ENCODE measurements at regions of chr12 and their contacts with region 1.

Region 1: GRCh38 chr12:10673660-10674384 is at the start of gene STYK1:
- DNase-seq: peak; percentile 86 to 92
- H3K4me3 ChIP-seq: peak within 1 kb of the TSS; percentile 60
- H3K4me3 Mint-ChIP-seq: peak within 1 kb of the TSS; percentile 76
- H3K27ac Mint-ChIP-seq: peak within 1 kb of the TSS; percentile 58
- H3K4me1 ChIP-seq: peaks cover 3% of the 10 kb centered on the region; the same call in 1 of the 2 replicates
- H3K4me1 Mint-ChIP-seq: peaks cover 7% of the 10 kb centered on the region
- H3K27me3 ChIP-seq: no peaks in the 10 kb centered on the region
- H3K27me3 Mint-ChIP-seq: peaks cover 3% of the 10 kb centered on the region
- CTCF ChIP-seq: peak; percentile 98 to 99
- total RNA-seq, gene STYK1: 4.5 and 4.9 TPM in 2 replicates

Region 2: GRCh38 chr12:10235761-10236631 is 437.8 kb before region 1 on chr12:
- CTCF ChIA-PET with region 1: no interaction called
- POLR2A ChIA-PET with region 1: no interaction called
- intact Hi-C with region 1: loop called (anchors 1 kb)
- DNase-seq: peak in 1 of 2 experiments; percentile 43
- H3K4me3 ChIP-seq: no peak overlapping the region
- H3K4me3 Mint-ChIP-seq: no peak overlapping the region
- H3K27ac Mint-ChIP-seq: no peak overlapping the region
- H3K4me1 ChIP-seq: no peaks in the 10 kb centered on the region
- H3K4me1 Mint-ChIP-seq: no peaks in the 10 kb centered on the region
- H3K27me3 ChIP-seq: no peaks in the 10 kb centered on the region
- H3K27me3 Mint-ChIP-seq: peaks cover 4% of the 10 kb centered on the region
- CTCF ChIP-seq: peak; percentile 81 to 87

Region 3: DNA sequence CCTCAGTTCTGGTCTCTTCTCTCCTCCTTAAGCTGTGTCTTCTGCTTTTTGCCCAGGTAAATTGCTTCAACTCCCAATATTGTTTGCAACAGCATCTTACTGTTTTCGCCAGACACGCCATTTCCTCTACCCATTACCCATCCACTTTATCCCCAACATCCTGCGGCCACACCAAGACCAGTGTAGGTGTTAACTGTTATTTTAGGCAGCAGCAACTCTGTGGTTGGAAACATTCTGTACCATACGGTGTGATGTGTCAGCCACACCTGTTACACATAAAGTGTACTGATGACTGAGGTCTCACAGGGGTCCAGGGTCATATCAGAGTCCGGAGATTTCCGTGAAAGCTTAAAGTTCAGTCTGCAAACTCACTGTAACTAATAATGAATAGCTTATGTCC is 387.9 kb before region 1 on chr12:
- CTCF ChIA-PET with region 1: no interaction called
- POLR2A ChIA-PET with region 1: no interaction called
- intact Hi-C with region 1: no loop called
- DNase-seq: no peak
- H3K4me3 ChIP-seq: no peak overlapping the region
- H3K4me3 Mint-ChIP-seq: no peak overlapping the region
- H3K27ac Mint-ChIP-seq: no peak overlapping the region
- H3K4me1 ChIP-seq: no peaks in the 10 kb centered on the region
- H3K4me1 Mint-ChIP-seq: no peaks in the 10 kb centered on the region
- H3K27me3 ChIP-seq: no peaks in the 10 kb centered on the region
- H3K27me3 Mint-ChIP-seq: peaks cover 17% of the 10 kb centered on the region
- CTCF ChIP-seq: no peak

Region 4: DNA sequence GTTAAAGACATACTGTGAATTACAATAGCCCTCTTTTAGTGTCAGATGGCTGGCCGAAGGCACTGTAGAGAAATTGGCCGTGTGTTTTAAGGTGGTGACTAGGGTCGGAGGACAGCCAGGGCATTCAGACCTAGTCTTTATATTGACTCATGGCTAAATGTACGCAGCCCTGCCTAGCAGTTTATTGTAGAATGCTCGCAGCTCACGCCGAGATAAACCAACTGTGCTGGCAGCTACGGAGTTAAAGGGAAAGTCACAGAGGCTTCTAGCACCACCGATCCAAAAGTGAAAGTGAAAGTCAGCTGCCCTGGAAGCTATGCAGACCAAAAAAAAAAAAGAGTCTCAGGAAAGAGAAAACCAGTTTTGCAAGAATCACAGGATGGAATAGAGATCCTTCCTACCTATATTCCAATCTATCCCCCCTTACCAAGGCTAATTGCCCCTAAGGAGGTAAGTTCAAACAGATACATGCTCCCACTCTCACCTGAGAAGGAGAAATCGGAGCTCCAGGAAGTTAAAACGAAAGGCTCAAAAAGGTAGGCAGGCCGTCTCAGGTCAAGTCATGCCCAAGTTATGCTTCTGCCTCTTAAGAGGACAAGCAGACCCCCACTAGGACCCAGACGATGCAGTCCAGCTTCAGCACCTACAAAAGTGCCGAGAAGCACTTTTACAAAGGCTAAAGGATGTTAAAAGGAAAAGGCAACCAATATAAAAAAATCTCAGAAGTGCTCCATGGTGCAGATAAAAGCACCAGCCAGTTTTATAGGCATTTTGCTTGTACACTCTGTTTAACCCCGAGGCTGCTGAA is 308.8 kb before region 1 on chr12:
- CTCF ChIA-PET with region 1: no interaction called
- POLR2A ChIA-PET with region 1: no interaction called
- intact Hi-C with region 1: loop called (anchors 1 kb)
- DNase-seq: peak; percentile 84 to 88
- H3K4me3 ChIP-seq: peak overlapping the region; percentile 39
- H3K4me3 Mint-ChIP-seq: no peak overlapping the region
- H3K27ac Mint-ChIP-seq: no peak overlapping the region
- H3K4me1 ChIP-seq: peaks cover 57% of the 10 kb centered on the region
- H3K4me1 Mint-ChIP-seq: peaks cover 14% of the 10 kb centered on the region
- H3K27me3 ChIP-seq: no peaks in the 10 kb centered on the region
- H3K27me3 Mint-ChIP-seq: no peaks in the 10 kb centered on the region
- CTCF ChIP-seq: no peak

Region 5: GRCh38 chr12:10562306-10562933 is 111.4 kb before region 1 on chr12:
- CTCF ChIA-PET with region 1: no interaction called
- POLR2A ChIA-PET with region 1: no interaction called
- intact Hi-C with region 1: loop called (anchors 2 kb)
- DNase-seq: peak in 1 of 2 experiments; percentile 49
- H3K4me3 ChIP-seq: no peak overlapping the region
- H3K4me3 Mint-ChIP-seq: no peak overlapping the region
- H3K27ac Mint-ChIP-seq: no peak overlapping the region
- H3K4me1 ChIP-seq: no peaks in the 10 kb centered on the region
- H3K4me1 Mint-ChIP-seq: no peaks in the 10 kb centered on the region
- H3K27me3 ChIP-seq: no peaks in the 10 kb centered on the region
- H3K27me3 Mint-ChIP-seq: peaks cover 9% of the 10 kb centered on the region
- CTCF ChIP-seq: peak; percentile 67 to 83

Region 6: DNA sequence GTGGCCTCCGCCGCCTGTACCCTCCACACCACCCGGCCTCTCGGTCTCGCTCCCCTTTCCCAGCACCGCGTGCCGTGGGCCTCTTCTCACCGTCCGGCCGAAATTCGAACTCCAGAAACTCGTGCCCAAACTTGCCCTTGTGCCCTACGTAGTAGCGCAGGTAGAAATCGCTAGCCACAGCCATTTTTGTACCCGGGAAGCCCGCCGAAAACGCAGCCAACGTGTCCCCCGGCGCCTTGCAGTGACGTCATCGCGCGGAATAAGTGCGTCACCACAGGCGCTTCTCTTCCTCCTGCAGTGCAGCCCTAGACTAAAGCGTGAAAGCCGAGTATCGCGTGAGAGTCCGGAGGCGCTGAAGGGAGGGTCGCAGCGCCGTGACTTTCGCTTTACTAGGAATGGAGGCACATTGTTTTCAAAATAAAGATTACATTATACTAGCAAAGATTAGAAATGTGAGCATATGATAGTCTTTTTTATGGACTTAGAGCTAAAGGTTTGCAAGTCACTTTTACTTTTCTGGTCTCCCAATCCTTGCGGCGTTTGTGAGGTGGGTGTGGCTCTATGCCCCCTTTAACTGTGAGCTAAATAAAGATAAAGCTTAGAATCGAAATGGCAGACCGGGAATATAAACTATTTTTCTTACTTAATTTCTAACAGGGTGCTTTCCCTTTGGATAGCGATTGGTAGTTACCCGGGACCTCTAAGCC is 60.3 kb before region 1 on chr12 and contains the start of gene MAGOHB:
- CTCF ChIA-PET with region 1: no interaction called
- POLR2A ChIA-PET with region 1: no interaction called
- intact Hi-C with region 1: loop called (anchors 1 kb)
- DNase-seq: peak; percentile 99 to 100
- H3K4me3 ChIP-seq: peak within 1 kb of the TSS; percentile 90
- H3K4me3 Mint-ChIP-seq: peak within 1 kb of the TSS; percentile 100
- H3K27ac Mint-ChIP-seq: peak within 1 kb of the TSS; percentile 100
- H3K4me1 ChIP-seq: peaks cover 5% of the 10 kb centered on the region; the same call in 1 of the 2 replicates
- H3K4me1 Mint-ChIP-seq: peaks cover 20% of the 10 kb centered on the region
- H3K27me3 ChIP-seq: no peaks in the 10 kb centered on the region
- H3K27me3 Mint-ChIP-seq: no peaks in the 10 kb centered on the region
- CTCF ChIP-seq: no peak
- total RNA-seq, gene MAGOHB: 134 and 137 TPM in 2 replicates

Region 7: DNA sequence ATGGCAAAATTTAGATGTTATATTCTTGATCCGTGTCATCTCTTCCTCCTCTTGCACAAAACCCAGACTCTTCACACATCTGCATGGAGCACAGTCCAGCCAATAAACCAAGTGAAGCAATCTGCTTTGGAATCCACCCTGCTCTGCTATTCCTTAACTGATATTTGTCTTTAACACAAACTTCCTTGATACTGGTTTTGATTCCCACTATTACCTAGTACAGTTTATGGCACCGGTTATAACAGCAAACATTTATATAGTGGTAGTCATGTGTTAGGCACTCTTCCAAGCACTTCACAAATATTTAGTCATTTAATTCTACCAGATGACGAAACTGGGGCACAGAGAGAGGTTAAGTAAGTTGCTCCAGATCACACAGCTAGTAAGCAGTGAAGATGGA is 12.5 kb before region 1 on chr12:
- CTCF ChIA-PET with region 1: no interaction called
- POLR2A ChIA-PET with region 1: no interaction called
- intact Hi-C with region 1: no loop called
- DNase-seq: no peak
- H3K4me3 ChIP-seq: no peak overlapping the region
- H3K4me3 Mint-ChIP-seq: no peak overlapping the region
- H3K27ac Mint-ChIP-seq: no peak overlapping the region
- H3K4me1 ChIP-seq: no peaks in the 10 kb centered on the region
- H3K4me1 Mint-ChIP-seq: no peaks in the 10 kb centered on the region
- H3K27me3 ChIP-seq: no peaks in the 10 kb centered on the region
- H3K27me3 Mint-ChIP-seq: no peaks in the 10 kb centered on the region
- CTCF ChIP-seq: no peak

Region 8: GRCh38 chr12:10749700-10750384 is 76.0 kb after region 1 on chr12:
- CTCF ChIA-PET with region 1: no interaction called
- POLR2A ChIA-PET with region 1: no interaction called
- intact Hi-C with region 1: loop called (anchors 2 kb)
- DNase-seq: peak; percentile 87 to 91
- H3K4me3 ChIP-seq: peak overlapping the region; percentile 24
- H3K4me3 Mint-ChIP-seq: peak overlapping the region; percentile 70
- H3K27ac Mint-ChIP-seq: no peak overlapping the region
- H3K4me1 ChIP-seq: no peaks in the 10 kb centered on the region; the same call in 1 of the 2 replicates
- H3K4me1 Mint-ChIP-seq: peaks cover 6% of the 10 kb centered on the region
- H3K27me3 ChIP-seq: no peaks in the 10 kb centered on the region
- H3K27me3 Mint-ChIP-seq: peaks cover 9% of the 10 kb centered on the region
- CTCF ChIP-seq: peak; percentile 96 to 99

Measured in Caco-2 (cell line).